ENCODE measurements at regions of chr15 and their contacts with region 1.

Region 1: DNA sequence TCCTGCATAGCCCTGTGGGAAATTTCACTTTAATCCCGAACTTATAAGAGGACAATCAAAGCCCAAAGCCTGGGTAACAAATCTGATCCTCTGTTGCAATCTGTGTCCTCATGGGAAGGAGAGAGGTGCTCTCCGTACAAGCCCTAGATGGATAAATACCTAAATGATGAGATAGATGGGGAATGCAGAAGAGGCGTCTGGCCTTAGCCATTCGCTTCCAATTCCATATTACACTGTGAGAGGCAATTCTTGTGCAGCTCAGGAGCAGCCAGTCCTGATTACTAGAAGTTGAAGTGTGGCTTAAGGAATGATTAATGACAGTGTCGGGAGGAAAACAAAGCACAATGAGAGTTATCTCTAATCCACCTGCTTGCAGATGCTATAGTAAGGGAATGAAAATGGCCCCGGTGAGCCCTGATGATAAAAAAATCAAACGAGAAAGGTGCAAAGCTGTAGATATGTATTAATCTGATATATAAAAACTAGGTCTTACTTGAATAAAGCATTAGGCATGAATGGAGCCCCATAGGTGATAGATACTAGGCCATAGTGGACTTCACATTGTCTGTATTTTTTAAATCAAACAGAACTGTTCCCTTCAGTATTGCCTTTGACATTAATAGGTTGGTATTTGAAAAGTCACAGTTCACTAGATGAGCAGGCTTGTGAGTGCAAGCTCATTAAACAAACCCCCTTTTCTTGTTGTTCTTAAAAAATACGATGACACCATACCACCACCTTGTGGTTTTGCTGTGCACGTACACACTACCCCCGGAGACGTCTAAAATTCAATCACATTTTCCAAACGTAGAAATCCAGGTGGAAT is 54.2 kb upstream of the TMCO5A start:
- DNase-seq: peak; percentile 38
- ATAC-seq: peak; percentile 75; the same call in 1 of the 2 replicates
- H3K4me3 ChIP-seq: no peak overlapping the region
- H3K27ac ChIP-seq: no peak overlapping the region
- H3K4me1 ChIP-seq: peaks cover 13 to 20% of the 10 kb centered on the region in 2 experiments
- H3K27me3 ChIP-seq: peaks cover 19% of the 10 kb centered on the region
- CTCF ChIP-seq: peak; percentile 31 to 91 (median 78); a peak in 5 of 6 replicates
- POLR2A ChIP-seq: no peak
- RAD21 ChIP-seq: peak; percentile 68

Region 2: GRCh38 chr15:36501063-36501678 is 1379.1 kb before region 1 on chr15:
- CTCF ChIA-PET with region 1: interaction called, 3 read pairs
- POLR2A ChIA-PET with region 1: no interaction called
- RAD21 ChIA-PET with region 1: no interaction called
- intact Hi-C with region 1: loop called (anchors 5 kb)
- DNase-seq: peak; percentile 69
- ATAC-seq: peak; percentile 100
- H3K4me3 ChIP-seq: no peak overlapping the region
- H3K27ac ChIP-seq: peak overlapping the region; percentile 30; the same call in 1 of the 2 replicates
- H3K4me1 ChIP-seq: peaks cover 6 to 11% of the 10 kb centered on the region in 2 experiments; a peak in 3 of 4 replicates
- H3K27me3 ChIP-seq: no peaks in the 10 kb centered on the region
- CTCF ChIP-seq: peak; percentile 44 to 85 (median 83); a peak in 5 of 6 replicates
- POLR2A ChIP-seq: no peak
- RAD21 ChIP-seq: peak; percentile 84

Region 3: GRCh38 chr15:37134699-37135131 is 745.5 kb before region 1 on chr15:
- CTCF ChIA-PET with region 1: interaction called, 4 read pairs
- POLR2A ChIA-PET with region 1: no interaction called
- RAD21 ChIA-PET with region 1: no interaction called
- intact Hi-C with region 1: loop called (anchors 5 kb)
- DNase-seq: peak; percentile 54
- ATAC-seq: peak; percentile 91
- H3K4me3 ChIP-seq: no peak overlapping the region
- H3K27ac ChIP-seq: no peak overlapping the region
- H3K4me1 ChIP-seq: no peaks in the 10 kb centered on the region
- H3K27me3 ChIP-seq: no peaks in the 10 kb centered on the region
- CTCF ChIP-seq: peak; percentile 59 to 63 (median 61); a peak in 5 of 6 replicates
- POLR2A ChIP-seq: no peak
- RAD21 ChIP-seq: peak; percentile 35; the same call in 1 of the 2 replicates

Region 4: GRCh38 chr15:37682304-37682703 is 197.9 kb before region 1 on chr15:
- CTCF ChIA-PET with region 1: no interaction called
- POLR2A ChIA-PET with region 1: no interaction called
- RAD21 ChIA-PET with region 1: no interaction called
- intact Hi-C with region 1: loop called (anchors 2 kb)
- DNase-seq: peak; percentile 16
- ATAC-seq: no peak; the same call in 1 of the 2 replicates
- H3K4me3 ChIP-seq: no peak overlapping the region
- H3K27ac ChIP-seq: no peak overlapping the region
- H3K4me1 ChIP-seq: no peaks in the 10 kb centered on the region
- H3K27me3 ChIP-seq: no peaks in the 10 kb centered on the region
- CTCF ChIP-seq: peak; percentile 5 to 45 (median 15); a peak in 3 of 6 replicates
- POLR2A ChIP-seq: no peak
- RAD21 ChIP-seq: peak; percentile 36

Region 5: DNA sequence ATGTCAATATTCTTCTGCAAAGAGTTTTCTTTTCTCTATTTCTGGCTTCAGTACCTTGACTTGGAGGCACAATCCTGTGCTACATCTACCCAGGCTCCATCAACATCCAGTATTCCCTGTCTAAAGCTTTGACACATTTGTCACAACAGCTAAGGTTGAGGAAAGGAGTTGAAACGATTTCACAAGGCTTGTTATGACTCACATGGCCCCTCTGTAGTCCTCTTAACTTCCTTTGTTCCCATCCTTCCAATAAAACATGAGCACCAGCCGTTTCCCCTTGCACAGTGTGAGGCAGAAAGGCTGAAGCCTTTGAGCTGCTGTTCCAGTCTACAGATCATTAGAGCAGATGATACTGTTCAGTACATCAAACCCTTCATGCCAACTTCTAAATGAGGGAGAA is 108.8 kb before region 1 on chr15:
- CTCF ChIA-PET with region 1: no interaction called
- POLR2A ChIA-PET with region 1: no interaction called
- RAD21 ChIA-PET with region 1: no interaction called
- intact Hi-C with region 1: no loop called
- DNase-seq: no peak
- ATAC-seq: no peak
- H3K4me3 ChIP-seq: no peak overlapping the region
- H3K27ac ChIP-seq: no peak overlapping the region
- H3K4me1 ChIP-seq: peaks cover 0 to 5% of the 10 kb centered on the region in 2 experiments; a peak in 1 of 4 replicates
- H3K27me3 ChIP-seq: no peaks in the 10 kb centered on the region
- CTCF ChIP-seq: no peak
- POLR2A ChIP-seq: no peak
- RAD21 ChIP-seq: no peak

Region 6: DNA sequence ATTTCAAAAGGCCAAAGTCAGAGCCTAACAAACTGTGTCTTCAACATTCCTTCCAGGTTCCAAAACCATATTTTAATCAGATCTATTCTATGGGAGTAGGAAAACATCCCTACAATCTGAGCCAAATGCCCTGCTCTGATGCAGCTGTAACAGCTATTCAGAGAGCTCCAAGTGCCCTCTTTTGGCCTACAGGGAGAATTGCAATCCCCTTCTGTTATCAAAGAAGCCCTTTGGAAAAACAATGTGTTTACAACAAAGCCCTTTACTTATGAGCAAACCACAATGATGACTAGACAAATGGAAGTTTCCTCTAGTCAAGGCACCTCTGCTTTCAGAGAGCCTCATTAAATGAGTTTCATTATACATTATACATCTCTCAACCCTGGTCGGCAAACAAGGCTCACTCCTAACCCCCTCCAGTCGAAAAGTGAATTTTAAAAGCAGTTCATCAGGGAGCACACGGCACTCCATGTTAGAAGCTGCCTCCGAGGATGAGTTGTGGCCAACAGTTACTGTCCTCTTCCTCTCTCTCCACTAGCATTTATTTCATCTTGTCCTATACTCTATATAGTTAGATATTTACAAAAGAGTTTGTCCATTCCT is 11.6 kb after region 1 on chr15:
- CTCF ChIA-PET with region 1: interaction called, 18 read pairs
- POLR2A ChIA-PET with region 1: interaction called, 3 read pairs
- RAD21 ChIA-PET with region 1: no interaction called
- intact Hi-C with region 1: no loop called
- DNase-seq: peak; percentile 38
- ATAC-seq: peak; percentile 93
- H3K4me3 ChIP-seq: no peak overlapping the region
- H3K27ac ChIP-seq: no peak overlapping the region
- H3K4me1 ChIP-seq: no peaks in the 10 kb centered on the region
- H3K27me3 ChIP-seq: no peaks in the 10 kb centered on the region
- CTCF ChIP-seq: peak; percentile 26 to 86 (median 71); a peak in 5 of 6 replicates
- POLR2A ChIP-seq: no peak
- RAD21 ChIP-seq: peak; percentile 62

Measured in HCT116 (cell line).